ENCODE measurements at regions of chr12 and their contacts with region 1.

Region 1: GRCh38 chr12:30847259-30847658 is 79.3 kb upstream of the TSPAN11 start:
- DNase-seq: peak; percentile 32
- H3K4me3 Mint-ChIP-seq: no peak overlapping the region
- H3K27ac Mint-ChIP-seq: no peak overlapping the region
- H3K4me1 Mint-ChIP-seq: peaks cover 4% of the 10 kb centered on the region
- H3K27me3 Mint-ChIP-seq: peaks cover 5% of the 10 kb centered on the region

Region 2: DNA sequence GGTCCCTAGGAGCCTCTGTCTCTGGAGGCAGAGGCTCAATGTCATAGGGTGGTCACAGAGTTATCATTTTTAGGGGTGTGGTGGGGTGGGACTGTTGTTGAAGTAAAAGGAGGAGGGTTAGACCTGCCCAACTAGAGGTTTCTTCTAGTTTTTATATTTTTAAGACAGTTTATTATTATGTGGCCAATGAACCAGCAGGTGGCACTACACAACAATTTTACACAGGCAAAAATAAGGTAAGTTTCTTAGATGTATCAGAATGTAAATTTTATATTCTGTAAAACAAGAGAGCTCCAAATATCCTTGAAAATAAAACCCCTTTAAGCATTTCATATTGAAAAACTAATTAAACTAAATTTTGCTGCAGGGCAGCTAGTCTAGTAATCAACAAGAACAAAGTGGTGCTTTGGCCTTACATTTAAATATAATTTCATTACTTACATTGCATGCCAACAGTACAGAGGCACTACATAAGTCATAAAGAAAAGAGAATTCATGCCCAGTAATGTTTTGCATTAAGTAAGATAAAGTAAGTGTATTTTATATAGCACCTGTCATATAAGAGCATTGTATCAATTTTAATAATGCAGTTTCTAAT is 1327.6 kb before region 1 on chr12:
- CTCF ChIA-PET with region 1: no interaction called
- intact Hi-C with region 1: loop called (anchors 1 kb)
- DNase-seq: peak; percentile 57
- H3K4me3 Mint-ChIP-seq: no peak overlapping the region
- H3K27ac Mint-ChIP-seq: no peak overlapping the region
- H3K4me1 Mint-ChIP-seq: no peaks in the 10 kb centered on the region
- H3K27me3 Mint-ChIP-seq: peaks cover 11% of the 10 kb centered on the region

Region 3: DNA sequence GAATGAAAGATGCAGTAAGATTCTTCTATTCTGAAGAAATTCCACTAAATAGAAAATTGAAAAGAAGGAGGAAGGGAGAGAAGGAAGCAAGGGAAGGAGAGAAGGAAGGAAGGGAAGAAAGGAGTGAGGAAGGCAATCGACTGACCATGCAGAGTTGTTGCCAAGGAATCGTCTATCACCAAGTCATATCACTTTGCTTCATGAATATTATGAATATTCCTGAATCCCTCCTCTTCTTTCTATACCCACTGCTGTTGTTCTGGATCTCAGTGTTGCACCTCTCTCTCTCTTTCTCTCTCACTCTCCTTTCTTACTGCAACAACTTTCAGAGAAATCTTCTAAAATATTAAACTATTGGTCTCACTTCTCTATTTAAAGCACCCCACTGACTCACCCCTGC is 374.0 kb before region 1 on chr12:
- CTCF ChIA-PET with region 1: no interaction called
- intact Hi-C with region 1: no loop called
- DNase-seq: no peak
- H3K4me3 Mint-ChIP-seq: no peak overlapping the region
- H3K27ac Mint-ChIP-seq: no peak overlapping the region
- H3K4me1 Mint-ChIP-seq: no peaks in the 10 kb centered on the region
- H3K27me3 Mint-ChIP-seq: peaks cover 4% of the 10 kb centered on the region

Region 4: GRCh38 chr12:30782316-30783173 is 64.7 kb before region 1 on chr12:
- CTCF ChIA-PET with region 1: no interaction called
- intact Hi-C with region 1: no loop called
- DNase-seq: no peak
- H3K4me3 Mint-ChIP-seq: no peak overlapping the region
- H3K27ac Mint-ChIP-seq: no peak overlapping the region
- H3K4me1 Mint-ChIP-seq: no peaks in the 10 kb centered on the region
- H3K27me3 Mint-ChIP-seq: peaks cover 10% of the 10 kb centered on the region

Region 5: DNA sequence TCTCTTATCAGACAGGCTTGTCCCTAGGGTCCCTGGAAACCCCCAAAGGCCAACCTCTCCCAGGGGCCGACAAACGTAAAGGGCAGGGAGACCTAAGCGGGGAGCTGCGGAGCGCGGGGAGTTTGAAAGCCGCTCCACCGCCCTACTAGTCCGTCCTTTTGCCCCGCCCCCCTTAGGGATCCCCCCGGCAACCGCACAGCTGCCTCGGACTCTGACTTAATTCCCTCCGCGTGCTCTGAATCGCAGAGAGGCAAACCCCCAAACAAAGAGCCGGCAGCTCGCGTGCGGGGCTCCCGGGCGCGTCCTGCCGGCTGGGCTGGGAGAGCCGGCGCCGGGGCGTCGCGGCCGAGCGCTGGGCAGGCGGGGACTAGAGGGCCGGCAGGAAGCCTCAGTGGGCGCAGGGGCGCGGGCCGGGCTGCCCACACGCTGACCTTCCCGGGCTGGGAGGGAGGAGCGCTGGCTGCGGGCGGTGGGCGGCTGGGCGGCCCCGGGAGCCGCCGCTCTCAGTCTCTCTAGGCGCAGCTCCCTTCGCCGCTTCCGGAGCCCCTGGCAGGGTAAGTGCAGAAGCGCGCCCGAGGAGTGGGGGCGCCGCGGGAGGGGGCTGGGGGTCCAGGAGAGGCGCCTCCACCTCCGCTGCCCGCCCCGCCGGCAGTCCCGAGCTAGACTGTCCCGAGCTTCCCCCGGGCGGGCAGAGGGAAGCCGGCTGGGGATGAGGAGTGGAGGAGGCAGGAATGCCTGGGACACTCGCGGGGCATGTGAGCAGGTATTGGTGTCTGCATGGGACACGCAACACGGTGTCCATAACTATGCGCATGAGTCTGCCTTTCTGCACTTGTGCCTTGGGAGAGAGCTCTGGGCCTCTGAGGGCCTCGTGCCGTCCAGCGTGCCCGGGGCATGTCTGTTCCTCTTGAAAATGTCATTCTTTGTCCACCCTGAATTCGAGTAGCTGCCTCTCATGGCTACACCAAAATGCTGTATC is 79.3 kb after region 1 on chr12 and contains the start of gene TSPAN11:
- CTCF ChIA-PET with region 1: interaction called, 4 read pairs
- intact Hi-C with region 1: loop called (anchors 2 kb)
- DNase-seq: peak; percentile 12
- H3K4me3 Mint-ChIP-seq: no peak within 1 kb of the TSS
- H3K27ac Mint-ChIP-seq: no peak within 1 kb of the TSS
- H3K4me1 Mint-ChIP-seq: no peaks in the 10 kb centered on the region
- H3K27me3 Mint-ChIP-seq: peaks cover 39% of the 10 kb centered on the region
- total RNA-seq, gene TSPAN11: not detected

Region 6: DNA sequence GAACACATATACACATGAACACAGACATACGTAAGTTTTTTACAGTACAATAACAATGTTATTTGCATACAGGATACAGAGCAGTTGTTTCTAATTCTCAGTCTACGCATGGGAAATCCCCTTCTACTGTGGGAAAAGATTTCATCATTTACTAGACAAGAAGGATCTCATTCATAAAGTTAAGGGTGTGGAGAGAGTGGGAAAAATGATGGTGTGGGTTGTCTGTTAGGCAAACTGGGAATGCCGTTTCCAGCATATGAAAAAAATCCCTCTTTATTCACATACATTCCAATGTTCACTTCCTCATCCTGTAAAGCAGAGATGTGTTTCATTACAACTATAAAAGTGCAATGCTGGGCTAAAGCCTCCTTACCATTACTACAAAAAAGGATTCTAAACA is 357.8 kb after region 1 on chr12:
- CTCF ChIA-PET with region 1: no interaction called
- intact Hi-C with region 1: loop called (anchors 1 kb)
- DNase-seq: no peak
- H3K4me3 Mint-ChIP-seq: no peak overlapping the region
- H3K27ac Mint-ChIP-seq: peak overlapping the region; percentile 14
- H3K4me1 Mint-ChIP-seq: peaks cover 23% of the 10 kb centered on the region
- H3K27me3 Mint-ChIP-seq: peaks cover 15% of the 10 kb centered on the region

Region 7: GRCh38 chr12:31317471-31318395 is 470.5 kb after region 1 on chr12:
- CTCF ChIA-PET with region 1: no interaction called
- intact Hi-C with region 1: loop called (anchors 1 kb)
- DNase-seq: no peak
- H3K4me3 Mint-ChIP-seq: peak overlapping the region; percentile 74
- H3K27ac Mint-ChIP-seq: peak overlapping the region; percentile 99
- H3K4me1 Mint-ChIP-seq: peaks cover 73% of the 10 kb centered on the region
- H3K27me3 Mint-ChIP-seq: no peaks in the 10 kb centered on the region

Region 8: DNA sequence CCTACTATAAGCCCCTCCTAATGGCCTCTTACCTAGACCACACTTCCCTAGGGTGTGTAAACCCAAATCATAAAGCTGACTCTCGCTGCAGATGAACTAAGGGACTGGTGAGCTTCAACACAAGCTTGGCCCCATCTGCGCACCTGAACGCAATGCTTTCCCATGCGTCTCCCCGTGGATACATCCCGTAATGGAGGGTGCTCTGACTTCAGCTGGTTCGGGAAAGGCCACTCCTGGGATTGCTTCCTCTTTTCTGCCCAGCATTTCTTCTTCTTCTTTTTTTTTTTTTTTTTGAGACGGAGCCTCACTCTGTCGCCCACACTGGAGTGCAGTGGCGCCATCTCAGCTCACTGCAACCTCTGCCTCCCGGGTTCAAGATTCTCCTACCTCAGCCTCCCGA is 784.5 kb after region 1 on chr12:
- CTCF ChIA-PET with region 1: no interaction called
- intact Hi-C with region 1: loop called (anchors 1 kb)
- DNase-seq: no peak
- H3K4me3 Mint-ChIP-seq: no peak overlapping the region
- H3K27ac Mint-ChIP-seq: no peak overlapping the region
- H3K4me1 Mint-ChIP-seq: peaks cover 4% of the 10 kb centered on the region
- H3K27me3 Mint-ChIP-seq: no peaks in the 10 kb centered on the region

Measured in activated naive CD4-positive, alpha-beta T cell treated with anti-CD3 and anti-CD28 coated beads for 36 hours (primary cell).